ENCODE measurements at regions of chr11 and their contacts with region 1.

Region 1: DNA sequence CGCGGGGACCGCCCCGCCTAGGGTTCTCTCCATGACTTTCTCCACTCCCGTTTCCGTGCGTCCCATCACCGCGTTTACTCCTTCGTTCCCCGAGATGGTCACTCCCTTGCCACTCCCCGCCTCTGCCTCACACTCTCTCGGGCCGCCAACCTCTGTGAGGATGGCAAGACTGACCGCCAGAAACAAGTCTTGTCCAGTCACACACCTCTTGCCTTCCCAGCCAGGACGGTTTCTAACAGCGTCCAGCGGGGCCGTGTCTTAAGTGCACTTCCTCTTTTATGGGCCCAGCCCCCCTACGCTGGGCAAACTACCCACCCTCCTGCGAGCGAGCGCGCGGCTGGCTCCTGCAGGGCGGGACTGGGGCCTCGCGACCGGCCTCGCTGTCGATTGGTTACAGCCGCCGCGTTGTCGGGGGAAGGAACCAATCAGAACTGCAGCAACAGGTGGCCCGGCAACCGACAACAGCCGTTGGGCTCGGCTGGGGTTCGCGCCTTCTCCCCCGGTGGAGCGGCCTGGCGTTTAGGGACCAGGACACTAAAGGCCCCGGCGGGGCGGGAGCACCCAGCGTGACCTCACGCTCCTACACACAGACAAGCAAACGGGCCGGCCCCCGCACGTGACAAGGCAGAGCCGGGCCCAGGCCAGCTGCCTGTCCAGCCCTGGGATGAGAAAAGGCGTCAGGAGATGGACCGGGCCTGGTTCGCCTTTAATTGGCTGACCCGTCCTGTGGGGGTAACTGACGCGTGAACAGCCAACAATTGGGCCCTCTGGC is 512 bp upstream of the UCP2 start:
- DNase-seq: peak; percentile 93 to 97 (median 94)
- ATAC-seq: peak; percentile 91 to 96 (median 94)
- H3K4me3 ChIP-seq: peak overlapping the region; percentile 25 to 85 (median 62)
- H3K27ac ChIP-seq: peak overlapping the region; percentile 6 to 91 (median 84)
- H3K4me1 ChIP-seq: peaks cover 0 to 42% (median 14%) of the 10 kb centered on the region in 12 donors
- H3K27me3 ChIP-seq: no peaks in the 10 kb centered on the region
- CTCF ChIP-seq: no peak
- POLR2A ChIP-seq: peak in 1 of 2 donors; percentile 46

Region 2: DNA sequence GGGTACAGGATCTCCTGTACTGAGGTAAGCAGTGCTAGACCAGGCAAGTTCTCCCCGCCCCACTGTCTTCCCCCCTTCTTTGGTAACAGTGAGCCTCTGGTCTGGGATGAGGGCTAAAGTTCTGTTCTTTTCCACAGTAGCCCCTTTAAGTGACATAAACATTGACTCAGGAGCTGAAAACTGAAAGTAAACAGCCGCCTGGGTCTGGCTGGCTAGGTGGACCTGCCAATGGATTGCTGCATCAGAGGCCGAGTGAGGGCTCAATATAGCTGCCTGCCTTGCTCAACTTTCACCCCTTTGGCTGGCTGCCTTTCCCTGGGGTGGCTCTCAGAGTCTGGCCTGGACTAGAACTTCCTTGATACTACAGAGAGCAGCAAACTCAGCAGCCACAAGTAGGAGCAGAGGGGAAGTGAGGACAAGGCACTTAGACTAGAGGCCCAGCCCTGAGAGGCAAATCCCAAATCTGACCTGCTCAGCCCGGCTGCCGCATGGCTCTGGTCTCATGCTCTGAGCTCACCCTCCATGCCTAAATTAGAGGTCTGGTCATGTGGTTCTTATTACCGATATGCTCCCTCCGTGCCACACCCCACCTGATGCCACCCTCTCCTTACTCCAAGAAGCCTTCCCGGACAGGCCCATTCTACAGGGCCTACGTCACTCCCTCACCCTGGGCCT is 35.3 kb after region 1 on chr11:
- intact Hi-C with region 1: loop called in 4 of 10 experiments (anchors 2 to 5 kb)
- DNase-seq: peak; percentile 90 to 96 (median 93)
- ATAC-seq: peak; percentile 95 to 96 (median 95)
- H3K4me3 ChIP-seq: no peak overlapping the region
- H3K27ac ChIP-seq: peak overlapping the region; percentile 76 to 97 (median 88)
- H3K4me1 ChIP-seq: peaks cover 0 to 75% (median 24%) of the 10 kb centered on the region in 12 donors
- H3K27me3 ChIP-seq: no peaks in the 10 kb centered on the region
- CTCF ChIP-seq: peak in 1 of 12 donors; percentile 6
- POLR2A ChIP-seq: peak in 1 of 2 donors; percentile 16

Region 3: DNA sequence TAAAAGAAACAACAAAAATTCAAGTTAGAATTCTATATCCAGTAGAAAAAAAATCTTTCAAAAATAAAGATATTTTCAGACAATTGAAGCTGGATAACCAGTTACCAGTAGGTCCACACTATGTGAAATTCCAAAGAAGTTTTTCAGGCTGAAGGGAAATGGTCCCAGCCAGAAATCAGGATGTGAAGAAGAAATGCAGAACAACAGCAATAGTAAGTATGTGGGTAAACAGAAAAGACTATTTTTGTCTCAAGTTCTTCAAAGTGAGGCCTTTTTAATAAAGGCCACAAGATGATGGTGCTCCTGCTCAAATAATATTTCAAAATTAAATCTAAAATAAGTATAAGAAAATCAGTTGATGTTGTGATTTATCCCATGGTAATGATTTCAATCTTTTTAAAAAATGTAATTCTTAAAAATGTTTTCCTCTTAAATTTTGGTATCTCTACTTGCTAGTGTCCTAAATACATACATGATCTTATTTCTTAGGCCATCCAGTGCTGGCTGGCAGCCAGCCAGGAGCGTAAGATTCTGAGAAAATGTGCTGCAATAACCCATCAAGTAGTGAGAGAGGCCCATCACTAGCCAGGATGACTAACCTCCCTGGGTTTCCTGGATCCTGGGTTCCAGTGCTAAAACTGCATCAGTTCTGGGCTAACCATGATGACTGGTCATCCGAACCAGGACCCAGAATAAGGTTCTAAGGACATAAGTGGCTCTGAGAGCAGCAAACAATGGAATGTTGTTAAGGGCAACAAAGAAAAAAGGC is 41.3 kb after region 1 on chr11:
- intact Hi-C with region 1: loop called in 4 of 10 experiments (anchors 2 to 5 kb)
- DNase-seq: peak in 2 of 5 donors; percentile 62 to 65
- ATAC-seq: peak in 1 of 4 donors; percentile 44
- H3K4me3 ChIP-seq: no peak overlapping the region
- H3K27ac ChIP-seq: peak overlapping the region in 1 of 12 donors; percentile 97
- H3K4me1 ChIP-seq: peaks cover 0 to 75% (median 7%) of the 10 kb centered on the region in 12 donors
- H3K27me3 ChIP-seq: no peaks in the 10 kb centered on the region
- CTCF ChIP-seq: no peak
- POLR2A ChIP-seq: no peak

Region 4: GRCh38 chr11:74090701-74091100 is 107.5 kb after region 1 on chr11:
- intact Hi-C with region 1: no loop called
- DNase-seq: no peak
- ATAC-seq: no peak
- H3K4me3 ChIP-seq: no peak overlapping the region
- H3K27ac ChIP-seq: no peak overlapping the region
- H3K4me1 ChIP-seq: no peaks in the 10 kb centered on the region
- H3K27me3 ChIP-seq: no peaks in the 10 kb centered on the region
- CTCF ChIP-seq: peak in 1 of 12 donors; percentile 8
- POLR2A ChIP-seq: no peak

Region 5: DNA sequence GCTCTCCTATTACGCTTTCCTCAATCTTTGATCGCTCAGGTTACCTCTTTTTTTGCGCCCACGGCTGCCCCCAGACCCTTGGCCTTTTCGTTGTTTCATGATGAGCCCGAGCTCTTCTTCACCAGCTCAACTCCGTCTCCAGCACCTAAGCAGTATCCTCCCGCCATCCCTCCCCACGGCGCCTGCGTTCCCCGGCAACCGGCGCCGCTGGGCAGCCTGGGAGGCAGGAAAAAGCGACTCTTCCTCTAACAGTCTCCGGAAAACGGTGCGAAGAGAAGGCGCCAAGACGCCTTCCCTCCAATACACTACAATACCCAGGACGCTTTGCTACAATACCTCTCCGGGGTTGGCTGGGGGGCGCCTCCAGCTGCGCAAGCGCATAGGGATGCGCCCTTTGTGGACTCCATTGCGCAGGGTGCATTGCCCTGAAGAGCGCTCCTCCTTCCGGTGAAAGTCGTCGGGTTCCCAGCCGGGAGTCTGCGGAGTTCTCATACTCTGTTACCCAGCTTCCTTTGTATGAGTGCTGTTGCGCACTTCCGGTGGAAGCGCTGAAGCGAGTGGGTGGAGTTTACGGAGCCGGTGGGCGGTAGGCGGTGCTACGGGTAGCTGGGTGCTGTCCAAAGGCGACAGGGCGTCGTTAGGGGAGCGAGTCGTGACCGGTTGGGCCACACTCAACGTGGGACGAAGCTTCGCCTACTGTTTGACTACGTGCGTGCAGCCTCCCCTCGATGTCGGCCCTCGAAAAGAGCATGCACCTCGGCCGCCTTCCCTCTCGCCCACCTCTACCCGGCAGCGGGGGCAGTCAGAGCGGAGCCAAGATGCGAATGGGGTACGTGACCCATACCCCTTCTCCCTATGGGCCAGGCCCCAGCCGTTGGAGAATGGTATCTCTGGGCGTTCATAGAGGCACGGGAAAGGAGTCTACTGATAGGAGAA is 187.8 kb after region 1 on chr11 and contains the starts of genes C2CD3 and PPME1:
- intact Hi-C with region 1: loop called in 2 of 10 experiments (anchors 5 to 10 kb)
- DNase-seq: peak; percentile 98 to 99 (median 98)
- ATAC-seq: peak; percentile 98 to 99 (median 98)
- H3K4me3 ChIP-seq: peak within 1 kb of the TSS; percentile 62 to 87 (median 77)
- H3K27ac ChIP-seq: peak within 1 kb of the TSS; percentile 24 to 92 (median 88)
- H3K4me1 ChIP-seq: peaks cover 4 to 42% (median 29%) of the 10 kb centered on the region in 12 donors
- H3K27me3 ChIP-seq: no peaks in the 10 kb centered on the region
- CTCF ChIP-seq: peak in 9 of 12 donors; percentile 26 to 63 (median 42)
- POLR2A ChIP-seq: peak in 1 of 2 donors; percentile 79
- total RNA-seq, gene C2CD3: 9.7 to 18.7 (median 14.9) TPM
- total RNA-seq, gene PPME1: 23.1 to 31.5 (median 28.5) TPM

Region 6: DNA sequence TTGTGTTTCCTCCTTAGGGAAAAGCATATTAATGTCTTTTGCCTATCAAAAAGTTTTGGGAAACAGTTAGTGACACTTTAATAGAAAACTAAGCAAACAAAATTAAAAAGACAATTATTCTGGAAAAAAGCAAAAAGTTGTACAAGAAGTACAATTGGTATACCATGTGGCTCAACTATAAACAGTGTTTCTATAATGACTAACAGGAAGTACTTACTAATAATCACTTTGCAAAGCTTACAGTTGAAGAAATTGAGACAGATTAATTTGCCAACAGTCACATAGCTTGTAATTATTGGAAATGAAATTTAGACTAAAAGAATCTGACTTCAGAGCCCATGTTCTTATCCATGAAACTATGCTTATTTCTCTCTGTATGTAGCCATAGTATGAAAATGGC is 212.7 kb after region 1 on chr11:
- intact Hi-C with region 1: no loop called
- DNase-seq: no peak
- ATAC-seq: no peak
- H3K4me3 ChIP-seq: no peak overlapping the region
- H3K27ac ChIP-seq: no peak overlapping the region
- H3K4me1 ChIP-seq: no peaks in the 10 kb centered on the region
- H3K27me3 ChIP-seq: no peaks in the 10 kb centered on the region
- CTCF ChIP-seq: no peak
- POLR2A ChIP-seq: no peak

Measured in heart left ventricle (tissue), 16 donors.